Activated CD4-positive, alpha-beta T cell treated with anti-CD3 and anti-CD28 coated beads, Interleukin-2, amount 10 ng/mL, durations not matched to agents 24 days and 14 days (primary cell): ENCODE measurements at regions of chr1 and their contacts with region 1.

Region 1: DNA sequence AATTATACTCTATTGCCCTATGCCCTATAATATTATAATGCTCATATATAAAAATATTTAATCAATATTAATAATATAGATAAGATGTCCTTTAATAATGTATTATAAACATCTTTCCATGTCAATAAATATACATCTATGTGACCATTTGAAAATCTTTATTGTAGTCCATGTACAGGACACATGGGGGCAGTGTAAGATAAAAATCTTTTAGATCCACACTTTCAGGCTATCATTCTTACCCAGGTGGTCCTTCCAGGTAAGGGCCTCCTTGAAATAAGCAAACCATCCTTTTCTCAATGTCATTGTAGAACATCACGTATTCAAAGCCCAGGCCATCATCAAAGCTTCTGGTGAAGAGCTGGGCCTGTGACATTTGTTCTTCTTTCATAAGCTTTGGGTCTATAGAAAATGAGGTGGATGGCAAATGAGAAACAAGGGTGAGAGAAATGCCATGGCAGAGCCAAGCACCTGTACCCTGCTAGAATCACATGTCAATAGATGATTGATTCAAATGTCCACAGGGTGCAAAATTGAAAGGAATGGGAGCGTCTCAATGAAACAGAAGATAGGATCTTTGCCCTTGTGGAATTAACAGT is 20.2 kb downstream of the THEM4 start:
- DNase-seq: peak; percentile 60
- H3K4me3 Mint-ChIP-seq: no peak overlapping the region
- H3K27ac Mint-ChIP-seq: no peak overlapping the region
- H3K4me1 Mint-ChIP-seq: peaks cover 28% of the 10 kb centered on the region
- H3K27me3 Mint-ChIP-seq: no peaks in the 10 kb centered on the region

Region 2: DNA sequence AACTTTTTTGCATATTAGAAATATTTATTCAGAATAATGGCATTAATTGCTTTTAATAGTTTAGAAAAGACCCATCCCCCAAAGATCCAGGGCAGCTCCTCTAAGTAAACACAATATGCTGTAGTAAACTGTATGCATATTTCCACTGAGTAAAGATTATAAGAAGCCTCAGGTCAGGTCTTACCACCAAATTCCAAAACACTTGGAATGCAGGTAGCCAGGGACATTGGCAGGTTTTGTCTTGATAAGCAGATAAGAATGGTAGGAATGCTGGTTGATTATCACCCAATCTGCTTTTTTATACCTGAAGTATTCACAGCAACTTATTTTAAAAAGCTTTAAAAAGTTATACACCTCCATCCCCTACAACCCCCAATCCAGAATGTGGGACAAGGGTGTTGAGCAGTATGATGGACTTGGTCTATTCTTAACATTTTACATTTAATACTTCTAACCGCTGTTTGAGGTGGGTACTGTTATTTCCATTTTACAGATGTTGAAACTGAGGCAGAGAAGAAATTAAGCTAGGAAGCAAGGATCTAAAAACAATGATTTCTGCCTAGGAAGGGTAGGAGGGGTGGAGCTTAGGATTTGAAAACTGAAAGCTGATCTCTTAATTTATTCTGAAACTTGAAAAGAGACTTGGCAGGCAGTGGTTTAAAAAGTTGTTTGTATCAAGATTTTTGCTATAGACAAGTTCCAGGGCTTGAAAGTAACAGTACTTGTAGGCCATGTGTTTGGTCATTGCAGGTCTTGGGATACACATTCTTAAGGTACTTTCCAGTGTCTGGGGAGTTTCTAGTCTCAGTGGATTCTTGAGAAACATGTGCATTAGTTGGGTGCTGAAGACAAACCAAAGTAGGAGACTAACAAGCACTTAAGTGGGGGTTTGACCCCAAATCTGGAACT is 35.9 kb after region 1 on chr1:
- intact Hi-C with region 1: loop called (anchors 5 kb)
- DNase-seq: peak; percentile 69
- H3K4me3 Mint-ChIP-seq: peak overlapping the region; percentile 51
- H3K27ac Mint-ChIP-seq: peak overlapping the region; percentile 84
- H3K4me1 Mint-ChIP-seq: peaks cover 11% of the 10 kb centered on the region
- H3K27me3 Mint-ChIP-seq: peaks cover under 1% of the 10 kb centered on the region

Region 3: GRCh38 chr1:152078831-152079441 is 189.9 kb after region 1 on chr1:
- intact Hi-C with region 1: no loop called
- DNase-seq: no peak
- H3K4me3 Mint-ChIP-seq: no peak overlapping the region
- H3K27ac Mint-ChIP-seq: no peak overlapping the region
- H3K4me1 Mint-ChIP-seq: no peaks in the 10 kb centered on the region
- H3K27me3 Mint-ChIP-seq: peaks cover 25% of the 10 kb centered on the region